ENCODE measurements at regions of chr9 and their contacts with region 1.

Region 1: GRCh38 chr9:114894801-114895433 is 35.5 kb downstream of the TNFSF8 start:
- DNase-seq: peak; percentile 99
- H3K4me3 ChIP-seq: peak overlapping the region in 1 of 3 experiments; percentile 16
- H3K27ac ChIP-seq: peak overlapping the region; percentile 100
- H3K4me1 ChIP-seq: peaks cover 63% of the 10 kb centered on the region
- H3K27me3 ChIP-seq: no peaks in the 10 kb centered on the region
- CTCF ChIP-seq: no peak
- POLR2A ChIP-seq: peak; percentile 62

Region 2: DNA sequence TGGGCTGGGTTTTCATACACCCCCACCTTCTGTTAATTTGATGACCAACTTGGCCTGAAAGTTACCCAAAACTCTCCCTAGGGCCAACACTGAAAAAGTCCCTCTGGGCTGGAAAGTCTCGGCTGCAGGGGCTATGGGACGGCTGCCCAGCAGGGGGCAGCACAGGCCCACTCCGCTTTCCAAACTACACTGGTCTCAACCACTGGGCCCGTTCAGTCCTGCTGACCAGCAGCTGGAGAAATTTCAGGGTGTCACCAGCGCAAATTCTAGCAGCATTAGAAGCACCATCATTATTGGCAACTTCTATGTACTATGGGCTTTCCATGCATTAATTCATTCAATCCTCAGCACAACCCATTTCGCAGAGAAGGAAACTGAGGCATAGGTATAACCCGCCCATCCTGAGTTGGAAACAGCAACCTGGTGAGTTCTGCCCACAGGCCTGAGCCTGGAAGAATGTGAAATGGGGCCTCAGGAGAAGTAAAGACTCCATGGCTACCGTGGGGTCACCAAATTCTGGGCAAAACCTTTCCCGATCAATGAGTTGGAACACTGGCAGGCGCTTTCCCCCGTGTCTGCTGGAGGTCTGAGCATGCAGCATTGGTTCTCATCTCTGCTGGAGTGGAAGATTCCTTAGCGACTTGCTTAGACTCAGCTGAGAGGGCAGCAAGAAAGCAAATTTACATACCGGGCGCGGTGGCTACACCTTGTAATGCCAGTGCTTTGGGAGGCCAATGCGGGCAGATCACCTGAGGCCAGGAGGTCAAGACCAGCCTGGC is 555.6 kb before region 1 on chr9:
- CTCF ChIA-PET with region 1: no interaction called
- POLR2A ChIA-PET with region 1: no interaction called
- dilution Hi-C with region 1: no loop called
- intact Hi-C with region 1: no loop called
- DNase-seq: peak; percentile 29
- H3K4me3 ChIP-seq: no peak overlapping the region
- H3K27ac ChIP-seq: no peak overlapping the region
- H3K4me1 ChIP-seq: no peaks in the 10 kb centered on the region
- H3K27me3 ChIP-seq: no peaks in the 10 kb centered on the region
- CTCF ChIP-seq: peak; percentile 88 to 89
- POLR2A ChIP-seq: no peak

Region 3: GRCh38 chr9:114681594-114682332 is 213.2 kb before region 1 on chr9 and contains the start of gene TEX48:
- CTCF ChIA-PET with region 1: interaction called, 8 read pairs
- POLR2A ChIA-PET with region 1: no interaction called
- dilution Hi-C with region 1: no loop called
- intact Hi-C with region 1: loop called (anchors 1 kb)
- DNase-seq: peak; percentile 52
- H3K4me3 ChIP-seq: no peak within 1 kb of the TSS
- H3K27ac ChIP-seq: no peak within 1 kb of the TSS
- H3K4me1 ChIP-seq: peaks cover 23% of the 10 kb centered on the region
- H3K27me3 ChIP-seq: no peaks in the 10 kb centered on the region
- CTCF ChIP-seq: peak; percentile 67 to 78
- POLR2A ChIP-seq: no peak
- total RNA-seq, gene TEX48: not detected in 2 replicates

Region 4: GRCh38 chr9:114745108-114745848 is 149.6 kb before region 1 on chr9:
- CTCF ChIA-PET with region 1: no interaction called
- POLR2A ChIA-PET with region 1: no interaction called
- dilution Hi-C with region 1: no loop called
- intact Hi-C with region 1: loop called (anchors 1 kb)
- DNase-seq: peak; percentile 68
- H3K4me3 ChIP-seq: no peak overlapping the region
- H3K27ac ChIP-seq: peak overlapping the region; percentile 12
- H3K4me1 ChIP-seq: peaks cover 9% of the 10 kb centered on the region
- H3K27me3 ChIP-seq: no peaks in the 10 kb centered on the region
- CTCF ChIP-seq: no peak
- POLR2A ChIP-seq: no peak

Region 5: DNA sequence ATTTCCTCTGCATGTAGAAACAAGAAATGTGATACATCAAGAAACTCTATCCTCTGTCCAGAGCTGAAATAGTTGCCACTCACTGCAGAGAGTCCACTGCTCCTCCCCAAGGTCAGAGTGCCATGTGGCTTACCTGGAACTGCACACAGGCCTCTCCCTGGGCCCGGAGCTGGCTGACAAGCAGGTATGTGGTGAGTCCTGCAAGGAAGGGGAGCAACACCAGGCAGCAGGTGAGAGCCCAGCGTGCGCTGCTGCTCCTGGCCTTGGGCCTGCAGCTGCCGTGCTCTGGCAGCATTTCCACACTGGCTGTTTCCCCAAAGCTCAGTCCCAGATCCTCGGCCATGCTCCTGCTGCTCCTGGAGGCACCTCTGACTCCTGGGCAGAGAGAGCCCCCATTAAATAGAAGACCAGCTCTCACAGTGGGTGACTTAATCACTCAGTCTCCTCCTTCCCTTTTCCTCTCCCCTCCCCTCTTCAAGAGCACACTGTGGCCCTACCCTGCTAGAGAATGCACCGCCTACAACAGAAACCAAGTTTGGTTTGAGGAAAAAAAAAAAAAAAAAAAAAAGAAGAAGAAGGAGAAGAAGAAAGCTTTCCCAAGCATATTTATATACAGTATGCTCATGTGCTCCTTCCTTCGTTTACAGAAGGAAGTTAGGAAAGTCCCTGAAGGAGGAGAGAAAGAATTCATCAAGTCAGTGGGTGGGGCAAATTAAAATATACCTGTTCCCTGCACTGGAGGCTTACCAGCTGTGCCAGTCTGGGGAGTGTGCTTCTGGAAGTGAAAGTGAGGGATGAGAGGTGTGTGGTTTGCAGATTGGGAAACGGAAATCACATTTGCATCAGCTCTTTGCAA is 89.0 kb before region 1 on chr9 and contains the start of gene TNFSF15:
- CTCF ChIA-PET with region 1: interaction called, 3 read pairs
- POLR2A ChIA-PET with region 1: interaction called, 4 read pairs
- dilution Hi-C with region 1: no loop called
- intact Hi-C with region 1: loop called (anchors 1 kb)
- DNase-seq: peak; percentile 68
- H3K4me3 ChIP-seq: peak within 1 kb of the TSS; percentile 28 to 57 (median 33)
- H3K27ac ChIP-seq: peak within 1 kb of the TSS; percentile 64
- H3K4me1 ChIP-seq: peaks cover 38% of the 10 kb centered on the region
- H3K27me3 ChIP-seq: no peaks in the 10 kb centered on the region
- CTCF ChIP-seq: no peak
- POLR2A ChIP-seq: peak; percentile 54
- total RNA-seq, gene TNFSF15: 13.6 and 14.3 TPM in 2 replicates

Region 6: DNA sequence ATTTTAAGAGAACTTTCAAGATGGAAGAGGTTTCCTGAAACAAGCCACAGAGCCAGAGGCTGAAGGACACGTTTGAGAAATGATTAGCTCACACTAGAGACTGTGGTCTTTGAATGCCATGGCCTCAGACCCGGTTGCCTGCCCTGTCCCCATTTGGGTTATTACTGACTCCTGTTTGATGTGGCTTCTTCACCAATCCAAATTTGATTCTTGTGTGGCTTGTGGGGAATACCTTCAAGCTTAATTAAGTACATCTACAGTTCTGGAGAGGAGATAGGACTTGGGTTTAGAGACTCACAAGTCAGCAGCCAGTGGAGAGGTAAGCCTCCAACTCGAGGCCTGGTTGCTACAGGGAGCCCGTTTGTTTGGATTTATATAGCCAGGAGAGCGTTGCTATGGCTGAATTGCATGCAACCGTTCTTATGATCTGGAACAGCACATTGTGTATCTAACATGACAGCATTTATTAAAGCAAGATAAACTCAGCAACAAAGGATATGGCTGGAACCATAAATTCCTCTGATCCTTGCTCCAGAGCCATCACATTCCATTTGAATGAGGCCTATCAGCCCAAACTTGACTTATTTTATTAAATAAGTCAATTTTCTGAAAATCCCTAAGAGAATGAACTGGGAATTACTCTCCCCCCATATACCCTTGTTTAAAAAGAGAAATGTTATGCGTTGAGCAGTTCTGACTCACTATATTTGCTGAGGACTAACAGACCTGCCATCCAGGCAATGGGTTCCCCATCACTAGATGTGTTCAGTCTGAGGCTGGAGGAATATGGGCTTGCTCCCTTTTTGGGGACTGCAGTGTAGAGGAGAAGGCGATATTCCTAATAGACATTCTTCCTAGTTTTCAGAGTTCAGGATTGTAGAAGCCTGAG is 123.9 kb after region 1 on chr9:
- CTCF ChIA-PET with region 1: no interaction called
- POLR2A ChIA-PET with region 1: no interaction called
- dilution Hi-C with region 1: no loop called
- intact Hi-C with region 1: no loop called
- DNase-seq: no peak
- H3K4me3 ChIP-seq: no peak overlapping the region
- H3K27ac ChIP-seq: no peak overlapping the region
- H3K4me1 ChIP-seq: no peaks in the 10 kb centered on the region
- H3K27me3 ChIP-seq: no peaks in the 10 kb centered on the region
- CTCF ChIP-seq: no peak
- POLR2A ChIP-seq: no peak

Measured in endothelial cell of umbilical vein (primary cell).